ENCODE measurements at regions of chr3 and their contacts with region 1.

Region 1: DNA sequence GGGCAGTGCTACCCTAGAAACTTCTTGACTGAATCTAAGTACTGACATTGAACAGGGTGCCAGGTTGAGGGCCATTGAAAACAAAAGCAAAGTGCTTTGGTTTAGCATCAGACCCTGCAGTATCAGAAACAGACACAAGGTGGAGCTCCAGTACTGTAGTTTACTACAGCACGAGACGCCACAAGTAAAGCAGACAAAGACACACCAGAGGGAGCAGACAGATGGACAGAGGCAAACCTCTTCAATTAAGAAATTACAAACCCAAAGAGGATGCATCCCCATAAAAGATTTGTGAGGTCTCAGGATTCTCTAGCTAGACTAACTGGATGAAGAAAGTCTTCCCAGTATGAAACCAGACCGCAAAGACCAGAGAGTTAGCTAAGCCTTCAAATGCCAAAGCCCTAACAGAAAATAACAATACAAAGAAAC is 16.6 kb downstream of the TOP2B start:
- DNase-seq: peak; percentile 90
- ATAC-seq: peak; percentile 99
- H3K4me3 Mint-ChIP-seq: no peak overlapping the region
- H3K27ac Mint-ChIP-seq: peak overlapping the region; percentile 91
- H3K4me1 Mint-ChIP-seq: peaks cover 27% of the 10 kb centered on the region
- H3K27me3 Mint-ChIP-seq: no peaks in the 10 kb centered on the region
- CTCF ChIP-seq: peak; percentile 88

Region 2: DNA sequence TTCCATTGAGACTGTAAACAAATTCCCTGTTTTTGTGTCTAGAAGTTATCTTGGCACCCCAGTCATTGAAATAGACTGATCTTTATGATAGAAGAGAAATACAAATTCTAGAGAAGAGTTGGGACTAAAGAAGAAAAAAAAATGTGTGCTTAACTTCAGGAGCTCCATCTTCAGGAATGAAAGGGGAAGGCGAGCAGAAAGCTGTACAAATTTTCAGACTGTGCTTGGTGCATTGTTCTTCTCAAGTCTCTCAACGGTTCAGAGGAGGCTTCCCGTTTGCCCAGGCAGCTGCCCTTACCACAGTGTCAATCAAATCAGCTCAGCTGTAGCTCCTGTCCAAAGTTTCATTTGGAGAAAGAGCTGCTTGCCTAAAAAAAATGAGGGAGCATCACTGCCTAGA is 183.5 kb after region 1 on chr3:
- CTCF ChIA-PET with region 1: interaction called, 18 read pairs
- POLR2A ChIA-PET with region 1: no interaction called
- DNase-seq: no peak
- ATAC-seq: peak; percentile 52; the same call in 1 of the 2 replicates
- H3K4me3 Mint-ChIP-seq: no peak overlapping the region
- H3K27ac Mint-ChIP-seq: no peak overlapping the region
- H3K4me1 Mint-ChIP-seq: peaks cover 9% of the 10 kb centered on the region
- H3K27me3 Mint-ChIP-seq: no peaks in the 10 kb centered on the region
- CTCF ChIP-seq: no peak

Region 3: GRCh38 chr3:25856902-25857518 is 208.9 kb after region 1 on chr3:
- CTCF ChIA-PET with region 1: interaction called, 24 read pairs
- POLR2A ChIA-PET with region 1: no interaction called
- DNase-seq: no peak
- ATAC-seq: peak; percentile 88
- H3K4me3 Mint-ChIP-seq: no peak overlapping the region
- H3K27ac Mint-ChIP-seq: 0 out of 2 replicates have a peak overlapping the region, but pooled peaks have one; percentile 52
- H3K4me1 Mint-ChIP-seq: peaks cover 34% of the 10 kb centered on the region
- H3K27me3 Mint-ChIP-seq: no peaks in the 10 kb centered on the region
- CTCF ChIP-seq: no peak

Region 4: DNA sequence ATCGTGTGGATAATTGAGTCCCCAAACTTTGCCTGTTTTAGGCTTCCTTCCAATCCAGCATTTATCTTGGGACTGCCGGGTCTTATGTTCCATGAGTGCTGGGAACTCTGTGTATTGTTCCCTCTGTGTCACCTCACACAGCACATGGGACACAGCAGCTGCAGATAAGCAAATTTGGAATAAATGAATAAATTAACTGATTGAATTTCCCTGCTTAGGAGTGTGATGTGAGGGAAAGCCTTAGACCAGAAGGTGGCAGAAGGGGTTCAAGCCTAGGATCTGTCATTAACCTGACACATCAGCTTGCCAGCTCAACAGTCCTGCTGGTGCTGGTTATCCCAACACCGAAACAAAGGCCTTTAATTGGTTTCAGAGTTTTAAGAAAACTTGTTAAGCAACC is 256.1 kb after region 1 on chr3:
- CTCF ChIA-PET with region 1: interaction called, 10 read pairs
- POLR2A ChIA-PET with region 1: no interaction called
- DNase-seq: no peak
- ATAC-seq: peak; percentile 72
- H3K4me3 Mint-ChIP-seq: no peak overlapping the region
- H3K27ac Mint-ChIP-seq: no peak overlapping the region
- H3K4me1 Mint-ChIP-seq: peaks cover 31% of the 10 kb centered on the region
- H3K27me3 Mint-ChIP-seq: peaks cover 9% of the 10 kb centered on the region
- CTCF ChIP-seq: no peak

Region 5: GRCh38 chr3:25962249-25962648 is 314.1 kb after region 1 on chr3:
- CTCF ChIA-PET with region 1: interaction called, 17 read pairs
- POLR2A ChIA-PET with region 1: no interaction called
- DNase-seq: peak; percentile 27
- ATAC-seq: peak; percentile 98
- H3K4me3 Mint-ChIP-seq: no peak overlapping the region
- H3K27ac Mint-ChIP-seq: no peak overlapping the region
- H3K4me1 Mint-ChIP-seq: no peaks in the 10 kb centered on the region
- H3K27me3 Mint-ChIP-seq: no peaks in the 10 kb centered on the region
- CTCF ChIP-seq: peak; percentile 39; the same call in 1 of the 2 replicates

Region 6: DNA sequence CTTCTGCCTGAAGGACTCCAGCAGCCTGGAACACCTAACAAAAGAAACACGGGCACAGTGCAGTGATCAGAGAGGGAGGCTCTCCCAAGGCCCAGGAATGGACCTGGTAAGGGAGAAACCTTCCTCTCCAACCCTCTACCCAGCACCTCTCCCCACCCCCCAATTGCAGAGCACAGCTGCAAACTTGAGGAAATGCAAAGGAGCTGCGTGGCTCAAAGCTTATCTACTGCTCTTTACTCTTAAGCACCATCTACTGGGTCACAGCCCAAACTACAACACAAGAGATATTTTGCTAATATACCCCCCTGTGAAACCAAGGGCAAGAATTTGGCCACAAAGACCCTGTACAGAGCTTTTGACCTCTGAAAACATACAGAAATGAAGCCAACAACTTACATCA is 470.0 kb after region 1 on chr3:
- CTCF ChIA-PET with region 1: interaction called, 15 read pairs
- POLR2A ChIA-PET with region 1: no interaction called
- DNase-seq: peak; percentile 53
- ATAC-seq: peak; percentile 99
- H3K4me3 Mint-ChIP-seq: no peak overlapping the region
- H3K27ac Mint-ChIP-seq: no peak overlapping the region
- H3K4me1 Mint-ChIP-seq: peaks cover 6% of the 10 kb centered on the region; the same call in 1 of the 2 replicates
- H3K27me3 Mint-ChIP-seq: no peaks in the 10 kb centered on the region
- CTCF ChIP-seq: 0 out of 2 replicates have a peak, but pooled peaks have one; percentile 17